WTC11 (cell line): ENCODE measurements at regions of chr1 and their contacts with region 1.

Region 1: DNA sequence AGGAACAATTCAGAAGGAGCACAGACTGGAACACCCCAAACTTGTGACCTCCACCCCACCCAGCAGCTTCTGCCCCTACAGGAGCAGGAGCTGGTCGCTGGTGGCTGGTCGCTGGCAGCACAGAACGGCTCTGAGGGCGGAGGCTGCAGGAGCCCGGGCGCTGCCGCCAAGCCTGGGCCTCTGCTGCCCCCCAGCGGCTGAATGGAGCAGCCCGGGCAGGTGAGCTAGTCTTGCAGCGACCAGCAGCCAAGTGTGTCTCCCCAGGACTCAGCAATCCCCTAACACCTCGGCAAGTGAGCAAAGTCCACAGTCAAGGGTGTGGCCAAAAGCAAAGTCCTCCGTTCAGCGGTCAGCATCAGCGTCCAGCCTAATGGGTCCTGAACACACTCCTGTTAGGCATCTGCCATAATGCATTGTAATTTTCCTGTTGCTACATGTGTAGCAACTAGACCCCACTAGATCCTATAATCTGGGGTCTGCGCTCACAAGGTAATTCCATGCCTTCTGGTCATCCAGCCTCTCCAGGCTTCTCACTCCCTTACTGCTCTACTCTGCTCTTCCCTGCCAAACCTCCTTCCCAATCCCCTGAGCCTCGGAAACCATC is 12.1 kb upstream of the GJB5 start:
- DNase-seq: peak; percentile 92
- ATAC-seq: peak; percentile 93
- H3K4me3 Mint-ChIP-seq: no peak overlapping the region
- H3K27ac Mint-ChIP-seq: no peak overlapping the region
- H3K4me1 Mint-ChIP-seq: peaks cover 10% of the 10 kb centered on the region
- H3K27me3 Mint-ChIP-seq: peaks cover 8% of the 10 kb centered on the region
- CTCF ChIP-seq: peak; percentile 90

Region 2: DNA sequence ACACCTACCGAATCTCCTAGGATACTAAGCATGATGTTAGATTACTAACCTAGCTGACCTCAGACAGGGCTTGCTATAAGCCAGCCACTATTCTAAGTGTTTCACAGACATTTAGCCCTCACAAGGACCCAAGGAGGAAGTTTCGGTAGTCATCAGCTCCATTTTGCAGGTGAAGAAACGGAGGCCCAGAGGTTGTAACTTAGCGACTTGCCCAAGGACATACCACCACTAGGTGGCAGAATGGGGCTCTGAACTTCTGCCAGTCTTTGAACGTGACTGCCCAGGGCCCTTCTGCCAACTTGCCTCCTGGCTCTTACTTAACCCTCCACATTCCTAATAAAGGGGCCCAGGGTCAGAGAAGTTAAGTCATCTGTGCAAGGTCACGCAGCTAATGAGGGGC is 282.6 kb before region 1 on chr1:
- CTCF ChIA-PET with region 1: interaction called, 18 read pairs
- POLR2A ChIA-PET with region 1: no interaction called
- DNase-seq: peak; percentile 74
- ATAC-seq: peak; percentile 64
- H3K4me3 Mint-ChIP-seq: no peak overlapping the region
- H3K27ac Mint-ChIP-seq: no peak overlapping the region
- H3K4me1 Mint-ChIP-seq: no peaks in the 10 kb centered on the region
- H3K27me3 Mint-ChIP-seq: peaks cover 8% of the 10 kb centered on the region
- CTCF ChIP-seq: peak; percentile 61

Region 3: DNA sequence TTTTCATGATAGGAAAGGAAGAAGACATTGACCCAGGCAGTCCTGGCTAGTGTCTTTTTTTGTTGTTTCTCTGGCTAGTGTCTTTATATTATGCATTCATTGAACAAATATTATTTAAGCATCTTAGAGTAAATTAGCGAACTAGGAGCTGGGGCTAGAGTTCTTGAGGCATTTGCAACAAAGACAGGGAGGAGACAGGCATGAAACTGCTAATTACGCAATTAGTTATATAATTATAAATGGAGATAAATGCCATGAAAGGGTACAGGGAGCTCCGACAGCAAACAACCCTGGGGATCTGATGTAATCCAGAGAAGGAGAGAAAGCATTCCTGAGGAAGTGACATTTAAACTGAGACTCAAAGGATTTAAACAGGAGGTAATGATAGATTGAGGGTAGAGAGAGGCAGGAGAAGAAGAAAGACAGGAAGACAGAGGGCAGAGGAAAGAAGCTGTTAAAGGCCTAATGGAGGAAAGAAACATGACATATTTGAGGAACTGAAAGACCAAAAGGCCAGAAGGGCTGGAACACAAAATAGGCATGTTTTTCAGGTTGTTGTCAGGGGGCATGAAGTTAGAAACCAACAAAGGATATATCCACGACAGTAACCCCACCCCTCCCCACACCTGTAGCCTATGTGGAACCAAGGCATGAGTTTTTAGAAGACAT is 87.4 kb before region 1 on chr1:
- CTCF ChIA-PET with region 1: interaction called, 10 read pairs
- POLR2A ChIA-PET with region 1: no interaction called
- DNase-seq: no peak
- ATAC-seq: no peak
- H3K4me3 Mint-ChIP-seq: no peak overlapping the region
- H3K27ac Mint-ChIP-seq: 0 out of 2 replicates have a peak overlapping the region, but pooled peaks have one; percentile 34
- H3K4me1 Mint-ChIP-seq: peaks cover 44% of the 10 kb centered on the region
- H3K27me3 Mint-ChIP-seq: peaks cover 3% of the 10 kb centered on the region; the same call in 1 of the 2 replicates
- CTCF ChIP-seq: no peak

Region 4: DNA sequence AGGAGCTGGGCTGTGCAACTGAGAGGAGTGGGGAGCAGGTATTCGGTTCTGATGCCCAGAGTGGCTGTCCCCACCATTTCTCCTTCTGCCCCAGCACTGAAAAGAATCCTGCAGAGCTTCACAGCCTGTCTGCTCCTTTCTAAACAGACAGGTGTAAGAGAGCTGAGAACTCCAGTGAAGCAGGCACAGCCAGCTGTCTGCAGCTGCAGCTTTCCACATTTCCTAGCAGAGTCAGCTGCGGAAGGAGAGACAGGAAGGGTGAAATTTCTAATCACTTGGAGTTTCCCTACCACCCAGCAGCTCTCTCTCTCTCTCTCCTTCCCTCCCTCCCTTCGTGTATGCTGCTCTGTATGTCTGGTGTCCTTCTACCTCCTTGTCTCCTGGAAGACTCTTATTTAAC is 28.4 kb before region 1 on chr1:
- CTCF ChIA-PET with region 1: interaction called, 10 read pairs
- POLR2A ChIA-PET with region 1: no interaction called
- DNase-seq: no peak
- ATAC-seq: no peak
- H3K4me3 Mint-ChIP-seq: no peak overlapping the region
- H3K27ac Mint-ChIP-seq: no peak overlapping the region
- H3K4me1 Mint-ChIP-seq: no peaks in the 10 kb centered on the region
- H3K27me3 Mint-ChIP-seq: peaks cover 24% of the 10 kb centered on the region
- CTCF ChIP-seq: no peak

Region 5: GRCh38 chr1:34759503-34760357 is 17.0 kb after region 1 on chr1 and contains the start of gene GJB4:
- CTCF ChIA-PET with region 1: interaction called, 45 read pairs
- POLR2A ChIA-PET with region 1: interaction called, 3 read pairs
- DNase-seq: no peak
- ATAC-seq: peak; percentile 65
- H3K4me3 Mint-ChIP-seq: no peak within 1 kb of the TSS
- H3K27ac Mint-ChIP-seq: no peak within 1 kb of the TSS
- H3K4me1 Mint-ChIP-seq: peaks cover 26% of the 10 kb centered on the region
- H3K27me3 Mint-ChIP-seq: peaks cover 3% of the 10 kb centered on the region; the same call in 1 of the 2 replicates
- CTCF ChIP-seq: no peak
- total RNA-seq, gene GJB4: 0.07 to 0.23 TPM (median 0.09 TPM) in 3 replicates

Region 6: DNA sequence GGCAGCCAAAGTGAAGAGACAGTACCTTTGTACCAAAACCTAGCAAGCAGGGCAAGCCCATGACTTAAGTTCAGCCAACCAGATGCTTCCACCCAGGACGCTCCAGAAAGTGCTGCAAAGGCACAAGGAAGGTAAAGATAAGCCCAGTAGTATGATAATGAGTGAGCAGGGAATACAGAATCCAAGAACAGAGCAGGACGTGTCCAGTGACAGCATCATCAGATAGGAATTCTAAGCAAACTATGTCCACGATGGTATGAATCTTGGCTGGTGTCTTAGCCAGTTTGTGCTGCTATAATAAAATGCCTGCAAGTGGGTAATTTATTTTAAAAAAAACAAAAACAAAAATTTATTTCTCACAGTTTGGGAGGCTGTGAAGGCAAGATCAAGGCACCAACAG is 63.6 kb after region 1 on chr1:
- CTCF ChIA-PET with region 1: no interaction called
- POLR2A ChIA-PET with region 1: no interaction called
- DNase-seq: no peak
- ATAC-seq: no peak
- H3K4me3 Mint-ChIP-seq: no peak overlapping the region
- H3K27ac Mint-ChIP-seq: no peak overlapping the region
- H3K4me1 Mint-ChIP-seq: no peaks in the 10 kb centered on the region
- H3K27me3 Mint-ChIP-seq: peaks cover 3% of the 10 kb centered on the region; the same call in 1 of the 2 replicates
- CTCF ChIP-seq: no peak